PC-9 (cell line): ENCODE measurements at regions of chr9 and their contacts with region 1.

Region 1: GRCh38 chr9:72443855-72444254 is 77.6 kb upstream of the TMC1 start:
- DNase-seq: no peak
- H3K4me3 ChIP-seq: no peak overlapping the region
- H3K27ac ChIP-seq: peak overlapping the region; percentile 82
- H3K4me1 ChIP-seq: peaks cover 42% of the 10 kb centered on the region
- H3K27me3 ChIP-seq: no peaks in the 10 kb centered on the region
- CTCF ChIP-seq: no peak

Region 2: GRCh38 chr9:72305102-72305546 is 138.7 kb before region 1 on chr9:
- CTCF ChIA-PET with region 1: no interaction called
- POLR2A ChIA-PET with region 1: no interaction called
- intact Hi-C with region 1: loop called (anchors 5 kb)
- DNase-seq: peak; percentile 88 to 91
- H3K4me3 ChIP-seq: peak overlapping the region; percentile 25; the same call in 1 of the 2 replicates
- H3K27ac ChIP-seq: no peak overlapping the region
- H3K4me1 ChIP-seq: no peaks in the 10 kb centered on the region
- H3K27me3 ChIP-seq: no peaks in the 10 kb centered on the region
- CTCF ChIP-seq: no peak

Region 3: GRCh38 chr9:72396247-72397091 is 47.4 kb before region 1 on chr9:
- CTCF ChIA-PET with region 1: no interaction called
- POLR2A ChIA-PET with region 1: interaction called, 9 read pairs
- intact Hi-C with region 1: loop called (anchors 5 kb)
- DNase-seq: peak; percentile 4 to 96
- H3K4me3 ChIP-seq: peak overlapping the region; percentile 14; the same call in 1 of the 2 replicates
- H3K27ac ChIP-seq: peak overlapping the region; percentile 51
- H3K4me1 ChIP-seq: peaks cover 19% of the 10 kb centered on the region
- H3K27me3 ChIP-seq: no peaks in the 10 kb centered on the region
- CTCF ChIP-seq: no peak

Region 4: GRCh38 chr9:72478966-72479365 is 35.1 kb after region 1 on chr9:
- CTCF ChIA-PET with region 1: no interaction called
- POLR2A ChIA-PET with region 1: interaction called, 3 read pairs
- intact Hi-C with region 1: loop called (anchors 1 kb)
- DNase-seq: no peak
- H3K4me3 ChIP-seq: no peak overlapping the region
- H3K27ac ChIP-seq: peak overlapping the region; percentile 94
- H3K4me1 ChIP-seq: peaks cover 47% of the 10 kb centered on the region
- H3K27me3 ChIP-seq: no peaks in the 10 kb centered on the region
- CTCF ChIP-seq: no peak

Region 5: GRCh38 chr9:72540348-72540873 is 96.6 kb after region 1 on chr9:
- CTCF ChIA-PET with region 1: no interaction called
- POLR2A ChIA-PET with region 1: interaction called, 3 read pairs
- intact Hi-C with region 1: loop called (anchors 5 kb)
- DNase-seq: peak; percentile 43 to 60
- H3K4me3 ChIP-seq: no peak overlapping the region
- H3K27ac ChIP-seq: peak overlapping the region; percentile 42
- H3K4me1 ChIP-seq: peaks cover 54% of the 10 kb centered on the region
- H3K27me3 ChIP-seq: no peaks in the 10 kb centered on the region
- CTCF ChIP-seq: no peak

Region 6: GRCh38 chr9:72827950-72828731 is 384.3 kb after region 1 on chr9:
- CTCF ChIA-PET with region 1: no interaction called
- POLR2A ChIA-PET with region 1: no interaction called
- intact Hi-C with region 1: loop called (anchors 10 kb)
- DNase-seq: peak; percentile 16 to 97
- H3K4me3 ChIP-seq: no peak overlapping the region
- H3K27ac ChIP-seq: peak overlapping the region; percentile 92
- H3K4me1 ChIP-seq: peaks cover 31% of the 10 kb centered on the region
- H3K27me3 ChIP-seq: no peaks in the 10 kb centered on the region
- CTCF ChIP-seq: no peak